ENCODE measurements at regions of chr2 and their contacts with region 1.

Region 1: GRCh38 chr2:37635504-37636380 is 35.7 kb downstream of the CDC42EP3 start:
- DNase-seq: peak; percentile 89
- H3K4me3 Mint-ChIP-seq: peak overlapping the region; percentile 46
- H3K27ac Mint-ChIP-seq: peak overlapping the region; percentile 83
- H3K4me1 Mint-ChIP-seq: peaks cover 31% of the 10 kb centered on the region
- H3K27me3 Mint-ChIP-seq: peaks cover 13% of the 10 kb centered on the region

Region 2: DNA sequence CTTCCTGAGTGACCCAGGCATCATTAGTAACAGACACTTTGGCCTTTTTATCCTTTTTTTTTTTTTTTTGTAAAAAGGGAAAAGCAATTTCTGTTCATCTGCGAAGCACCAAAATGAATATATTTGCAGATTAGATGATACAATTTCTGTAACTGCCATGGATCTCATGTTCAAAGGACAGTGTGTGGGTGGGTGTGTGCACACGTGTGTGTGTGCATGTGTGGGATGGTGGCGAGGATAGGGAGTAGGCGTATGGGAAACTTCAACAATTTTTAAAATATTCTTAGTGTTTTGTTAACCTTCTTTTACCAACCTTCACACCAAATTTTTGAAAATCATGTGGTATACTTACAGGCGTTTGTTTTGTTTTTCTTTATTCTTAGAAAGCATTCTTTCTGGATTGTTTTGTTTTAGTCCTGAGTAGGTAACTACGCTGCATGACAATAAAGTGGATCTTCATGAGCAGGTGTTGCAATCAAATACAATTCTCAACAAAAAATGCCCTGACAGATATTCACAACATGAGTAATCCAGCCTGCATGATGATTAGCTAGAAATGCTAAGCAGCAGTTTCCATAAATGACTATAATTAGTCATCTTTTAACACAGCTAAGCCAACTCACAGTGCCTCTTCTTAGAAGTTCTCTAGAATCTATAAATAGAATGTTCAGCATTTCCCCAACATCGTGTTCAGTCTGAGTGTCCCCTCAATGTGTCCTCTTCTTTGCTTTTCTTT is 235.9 kb after region 1 on chr2:
- intact Hi-C with region 1: loop called (anchors 1 kb)
- DNase-seq: no peak
- H3K4me3 Mint-ChIP-seq: peak overlapping the region; percentile 69
- H3K27ac Mint-ChIP-seq: peak overlapping the region; percentile 94
- H3K4me1 Mint-ChIP-seq: peaks cover 45% of the 10 kb centered on the region
- H3K27me3 Mint-ChIP-seq: peaks cover 2% of the 10 kb centered on the region

Measured in activated CD4-positive, alpha-beta T cell treated with anti-CD3 and anti-CD28 coated beads, Interleukin-2, amount 10 ng/mL, durations not matched to agents 24 days and 14 days (primary cell).